ENCODE measurements at regions of chr6 and their contacts with region 1.

Region 1: GRCh38 chr6:75620381-75621304 is 19.0 kb downstream of the SENP6 start:
- DNase-seq: no peak
- H3K4me3 ChIP-seq: no peak overlapping the region
- H3K4me3 Mint-ChIP-seq: peak overlapping the region in 5 of 8 donors; percentile 17 to 68 (median 34)
- H3K27ac ChIP-seq: no peak overlapping the region
- H3K27ac Mint-ChIP-seq: peak overlapping the region; percentile 15 to 86 (median 75)
- H3K4me1 ChIP-seq: peaks cover 48% of the 10 kb centered on the region
- H3K4me1 Mint-ChIP-seq: peaks cover 32 to 65% (median 50%) of the 10 kb centered on the region in 4 donors
- H3K27me3 ChIP-seq: no peaks in the 10 kb centered on the region
- H3K27me3 Mint-ChIP-seq: no peaks in the 10 kb centered on the region

Region 2: DNA sequence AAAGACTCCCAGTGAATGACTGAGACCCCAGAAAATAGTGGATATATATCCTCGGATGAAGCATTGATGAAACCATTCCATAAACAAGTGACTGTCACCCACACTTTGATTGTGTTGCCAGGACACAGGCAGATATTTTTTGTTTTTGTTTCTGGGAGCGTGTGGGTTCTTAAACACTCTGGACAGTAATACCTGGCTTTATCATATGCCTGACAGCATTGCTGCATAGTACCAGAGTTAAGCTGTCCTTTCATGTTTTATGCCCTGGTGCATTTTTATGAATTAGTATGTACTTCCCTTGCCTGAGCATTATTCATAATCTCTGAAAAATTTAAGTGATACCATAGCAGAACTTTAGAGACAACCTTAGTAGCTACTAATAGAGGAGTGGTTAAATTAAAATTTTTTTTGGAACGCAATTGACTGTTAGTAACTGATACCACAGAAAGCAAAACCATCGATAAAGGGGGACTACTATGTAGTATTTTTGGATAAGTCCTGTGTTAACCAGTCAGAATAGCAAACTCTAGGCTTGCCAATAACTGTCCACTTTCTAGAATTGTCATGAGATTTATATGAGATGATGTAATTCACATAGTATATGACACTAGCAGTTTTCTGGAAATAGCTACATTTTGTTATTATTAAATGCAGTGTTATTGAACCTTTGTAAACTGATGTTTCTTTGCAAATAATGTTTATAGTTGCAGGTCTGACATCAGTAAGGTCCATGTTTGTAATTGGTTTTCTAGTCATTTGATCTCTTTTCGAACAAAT is 11.4 kb after region 1 on chr6:
- CTCF ChIA-PET with region 1: no interaction called
- POLR2A ChIA-PET with region 1: no interaction called
- intact Hi-C with region 1: loop called (anchors 2 kb)
- DNase-seq: no peak
- H3K4me3 ChIP-seq: no peak overlapping the region
- H3K4me3 Mint-ChIP-seq: no peak overlapping the region
- H3K27ac ChIP-seq: no peak overlapping the region
- H3K27ac Mint-ChIP-seq: peak overlapping the region in 3 of 7 donors; percentile 14 to 70 (median 68)
- H3K4me1 ChIP-seq: peaks cover 2% of the 10 kb centered on the region
- H3K4me1 Mint-ChIP-seq: peaks cover 9 to 18% (median 10%) of the 10 kb centered on the region in 4 donors
- H3K27me3 ChIP-seq: no peaks in the 10 kb centered on the region
- H3K27me3 Mint-ChIP-seq: no peaks in the 10 kb centered on the region